ENCODE measurements at regions of chr18 and their contacts with region 1.

Region 1: GRCh38 chr18:21261352-21261751 is 19.3 kb downstream of the GREB1L start:
- DNase-seq: no peak

Region 2: GRCh38 chr18:21230436-21230835 is 30.9 kb before region 1 on chr18:
- intact Hi-C with region 1: loop called in 1 of 2 experiments (anchors 2 kb)
- DNase-seq: no peak